ENCODE measurements at regions of chrX and their contacts with region 1.

Region 1: GRCh38 chrX:8815464-8816065 is 14.4 kb upstream of the FAM9A start:
- DNase-seq: peak; percentile 39
- H3K4me3 ChIP-seq: no peak overlapping the region
- H3K27ac ChIP-seq: no peak overlapping the region
- H3K4me1 ChIP-seq: no peaks in the 10 kb centered on the region
- CTCF ChIP-seq: peak; percentile 75

Region 2: DNA sequence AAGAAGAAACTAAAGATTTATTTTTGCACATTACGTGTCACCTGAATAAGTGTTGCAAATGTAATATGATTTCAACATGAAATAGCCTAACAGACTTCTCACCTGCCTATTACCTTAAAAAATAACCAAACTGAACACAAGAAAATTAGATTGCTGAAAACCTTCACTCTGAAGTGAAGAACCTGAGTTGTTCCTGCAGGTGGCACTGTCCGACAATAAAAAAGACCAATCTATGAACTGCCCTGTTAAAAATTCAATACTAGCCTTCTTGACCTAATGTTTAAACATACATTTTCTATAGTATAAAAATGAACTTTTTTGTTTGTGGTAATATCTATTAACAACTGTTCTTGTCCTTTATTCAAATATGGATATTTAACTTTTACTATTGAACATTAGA is 819.2 kb before region 1 on chrX:
- CTCF ChIA-PET with region 1: no interaction called
- POLR2A ChIA-PET with region 1: no interaction called
- intact Hi-C with region 1: loop called (anchors 10 kb)
- DNase-seq: peak; percentile 34
- H3K4me3 ChIP-seq: no peak overlapping the region
- H3K27ac ChIP-seq: no peak overlapping the region
- H3K4me1 ChIP-seq: no peaks in the 10 kb centered on the region
- CTCF ChIP-seq: peak; percentile 73

Region 3: DNA sequence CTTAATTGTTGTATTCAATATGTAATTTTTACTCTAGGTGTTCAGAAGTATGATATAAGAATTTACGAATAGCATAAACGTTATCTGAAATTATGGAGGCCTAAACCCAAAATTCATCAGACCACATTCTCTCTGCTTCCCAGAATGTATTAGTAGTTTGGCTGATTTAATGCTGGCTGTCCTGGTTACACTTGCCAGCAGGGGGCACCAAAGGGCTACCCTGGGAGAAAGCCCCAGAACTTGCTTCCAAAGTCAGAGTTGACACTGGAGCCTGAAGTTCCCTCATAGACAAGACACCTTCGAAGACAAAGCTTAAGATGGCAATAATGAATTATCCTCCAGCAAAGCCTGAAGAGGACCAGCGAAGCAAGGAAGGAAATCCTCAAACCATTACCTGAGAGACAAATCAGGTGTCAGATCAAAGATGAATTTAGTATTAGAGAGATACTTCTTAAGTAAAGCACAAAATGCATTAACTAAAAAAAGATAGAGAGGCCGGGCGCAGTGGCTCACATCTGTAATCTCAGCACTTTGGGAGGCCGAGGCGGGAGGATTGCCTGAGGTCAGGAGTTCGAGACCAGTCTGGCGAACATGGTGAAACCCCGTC is 72.3 kb before region 1 on chrX:
- CTCF ChIA-PET with region 1: no interaction called
- POLR2A ChIA-PET with region 1: interaction called, 3 read pairs
- intact Hi-C with region 1: loop called (anchors 5 kb)
- DNase-seq: peak; percentile 39
- H3K4me3 ChIP-seq: no peak overlapping the region
- H3K27ac ChIP-seq: no peak overlapping the region
- H3K4me1 ChIP-seq: no peaks in the 10 kb centered on the region
- CTCF ChIP-seq: peak; percentile 79

Region 4: GRCh38 chrX:9708904-9709553 is 893.5 kb after region 1 on chrX:
- CTCF ChIA-PET with region 1: no interaction called
- POLR2A ChIA-PET with region 1: no interaction called
- intact Hi-C with region 1: loop called (anchors 5 kb)
- DNase-seq: peak; percentile 81
- H3K4me3 ChIP-seq: no peak overlapping the region
- H3K27ac ChIP-seq: no peak overlapping the region
- H3K4me1 ChIP-seq: peaks cover 4% of the 10 kb centered on the region
- CTCF ChIP-seq: peak; percentile 82

Measured in OCI-LY7 (cell line).